Posterior vena cava (tissue), 2 donors: ENCODE measurements at regions of chr18 and their contacts with region 1.

Region 1: GRCh38 chr18:72652990-72653593 is 109.0 kb upstream of the CBLN2 start:
- DNase-seq: no peak

Region 2: GRCh38 chr18:71352618-71353017 is 1300.5 kb before region 1 on chr18:
- intact Hi-C with region 1: no loop called
- DNase-seq: no peak

Region 3: GRCh38 chr18:72630991-72631390 is 22.1 kb before region 1 on chr18:
- intact Hi-C with region 1: loop called in 1 of 2 experiments (anchors 1 kb)
- DNase-seq: no peak

Region 4: GRCh38 chr18:72704202-72704601 is 51.1 kb after region 1 on chr18:
- intact Hi-C with region 1: no loop called
- DNase-seq: no peak